ENCODE measurements at regions of chr2 and their contacts with region 1.

Region 1: GRCh38 chr2:23595601-23596251 is 210.7 kb downstream of the KLHL29 start:
- DNase-seq: peak; percentile 85
- H3K4me3 ChIP-seq: no peak overlapping the region
- H3K27ac ChIP-seq: peak overlapping the region; percentile 76 to 90 (median 88)
- H3K4me1 ChIP-seq: peaks cover 0 to 92% (median 67%) of the 10 kb centered on the region in 4 donors
- H3K27me3 ChIP-seq: no peaks in the 10 kb centered on the region
- CTCF ChIP-seq: no peak
- EP300 ChIP-seq: no peak
- POLR2A ChIP-seq: no peak

Region 2: GRCh38 chr2:23360571-23361125 is 235.1 kb before region 1 on chr2:
- intact Hi-C with region 1: no loop called
- DNase-seq: no peak
- H3K4me3 ChIP-seq: no peak overlapping the region
- H3K27ac ChIP-seq: no peak overlapping the region
- H3K4me1 ChIP-seq: no peaks in the 10 kb centered on the region
- H3K27me3 ChIP-seq: no peaks in the 10 kb centered on the region
- CTCF ChIP-seq: no peak
- EP300 ChIP-seq: no peak
- POLR2A ChIP-seq: no peak

Region 3: GRCh38 chr2:23524261-23524706 is 71.4 kb before region 1 on chr2:
- intact Hi-C with region 1: loop called (anchors 2 kb)
- DNase-seq: peak; percentile 84
- H3K4me3 ChIP-seq: no peak overlapping the region
- H3K27ac ChIP-seq: peak overlapping the region; percentile 87 to 93 (median 92)
- H3K4me1 ChIP-seq: peaks cover 0 to 69% (median 52%) of the 10 kb centered on the region in 4 donors
- H3K27me3 ChIP-seq: no peaks in the 10 kb centered on the region
- CTCF ChIP-seq: no peak
- EP300 ChIP-seq: no peak
- POLR2A ChIP-seq: no peak

Region 4: GRCh38 chr2:23578964-23579671 is 16.6 kb before region 1 on chr2:
- intact Hi-C with region 1: no loop called
- DNase-seq: no peak
- H3K4me3 ChIP-seq: no peak overlapping the region
- H3K27ac ChIP-seq: no peak overlapping the region
- H3K4me1 ChIP-seq: peaks cover 0 to 22% (median 19%) of the 10 kb centered on the region in 4 donors
- H3K27me3 ChIP-seq: no peaks in the 10 kb centered on the region
- CTCF ChIP-seq: no peak
- EP300 ChIP-seq: no peak
- POLR2A ChIP-seq: no peak

Region 5: DNA sequence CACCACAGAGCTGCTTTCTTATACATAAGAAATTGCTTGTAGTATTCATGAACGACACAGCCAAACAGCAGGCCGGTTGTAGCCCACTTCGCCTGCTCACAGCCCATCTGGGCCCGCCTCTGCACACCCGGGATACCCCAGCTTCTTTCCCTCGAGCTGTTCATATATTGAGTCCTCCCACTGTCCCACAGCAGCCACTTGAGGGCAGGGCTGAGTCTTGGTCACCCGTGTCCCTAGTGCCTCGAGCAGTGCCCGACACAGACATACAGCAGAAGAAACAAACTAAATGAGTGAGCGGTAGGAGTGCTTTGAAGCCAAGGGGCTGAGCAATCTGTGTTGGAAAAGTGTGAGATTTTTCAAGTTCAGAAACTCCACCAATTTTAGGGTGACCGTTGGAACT is 40.7 kb after region 1 on chr2:
- intact Hi-C with region 1: no loop called
- DNase-seq: no peak
- H3K4me3 ChIP-seq: no peak overlapping the region
- H3K27ac ChIP-seq: peak overlapping the region in 3 of 4 donors; percentile 40 to 73 (median 43)
- H3K4me1 ChIP-seq: peaks cover 0 to 19% (median 15%) of the 10 kb centered on the region in 4 donors
- H3K27me3 ChIP-seq: no peaks in the 10 kb centered on the region
- CTCF ChIP-seq: peak in 1 of 4 experiments; percentile 24
- EP300 ChIP-seq: no peak
- POLR2A ChIP-seq: no peak